ENCODE measurements at regions of chr2 and their contacts with region 1.

Region 1: GRCh38 chr2:166700079-166700478 is 188.2 kb upstream of the XIRP2 start:
- DNase-seq: no peak
- H3K4me3 ChIP-seq: no peak overlapping the region
- H3K27ac ChIP-seq: no peak overlapping the region
- H3K4me1 ChIP-seq: no peaks in the 10 kb centered on the region
- H3K27me3 ChIP-seq: no peaks in the 10 kb centered on the region
- CTCF ChIP-seq: peak in 3 of 11 experiments; percentile 10 to 41 (median 21)
- POLR2A ChIP-seq: no peak

Region 2: GRCh38 chr2:166725927-166726924 is 26.1 kb after region 1 on chr2:
- intact Hi-C with region 1: no loop called
- DNase-seq: no peak
- H3K4me3 ChIP-seq: no peak overlapping the region
- H3K27ac ChIP-seq: no peak overlapping the region
- H3K4me1 ChIP-seq: no peaks in the 10 kb centered on the region
- H3K27me3 ChIP-seq: no peaks in the 10 kb centered on the region
- CTCF ChIP-seq: no peak
- POLR2A ChIP-seq: no peak

Region 3: GRCh38 chr2:166994588-166995336 is 294.7 kb after region 1 on chr2:
- intact Hi-C with region 1: no loop called
- DNase-seq: no peak
- H3K4me3 ChIP-seq: no peak overlapping the region
- H3K27ac ChIP-seq: no peak overlapping the region
- H3K4me1 ChIP-seq: no peaks in the 10 kb centered on the region
- H3K27me3 ChIP-seq: no peaks in the 10 kb centered on the region
- CTCF ChIP-seq: no peak
- POLR2A ChIP-seq: no peak

Region 4: DNA sequence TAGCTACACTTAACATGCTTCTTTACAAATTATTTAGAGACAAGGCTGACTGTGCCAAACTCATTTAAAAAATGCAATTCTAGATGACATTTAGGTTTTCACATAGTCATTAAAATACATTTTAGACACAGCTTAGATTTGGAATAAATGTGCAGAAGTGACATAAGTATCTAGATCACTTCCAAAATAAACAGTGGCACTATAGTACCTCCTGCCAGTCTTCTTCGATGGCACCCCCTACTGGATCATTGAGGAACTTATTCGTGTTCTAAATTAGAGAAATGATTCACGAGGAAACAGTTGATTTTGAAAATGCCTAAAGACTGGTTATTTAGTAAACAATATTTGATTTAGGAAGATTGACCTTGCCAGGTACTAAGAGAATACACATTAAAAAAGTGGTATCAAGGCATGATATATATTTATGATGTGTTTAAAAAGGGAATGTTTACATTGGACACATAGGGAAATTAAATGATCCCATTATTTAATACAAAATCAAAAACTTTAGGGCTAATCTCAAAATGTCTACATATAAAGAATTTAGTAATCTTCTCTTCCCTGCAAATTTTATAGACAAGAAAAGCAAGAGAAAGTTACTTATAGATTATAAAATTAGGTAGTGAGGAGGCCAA is 512.1 kb after region 1 on chr2:
- intact Hi-C with region 1: loop called (anchors 10 kb)
- DNase-seq: no peak
- H3K4me3 ChIP-seq: no peak overlapping the region
- H3K27ac ChIP-seq: no peak overlapping the region
- H3K4me1 ChIP-seq: no peaks in the 10 kb centered on the region
- H3K27me3 ChIP-seq: no peaks in the 10 kb centered on the region
- CTCF ChIP-seq: peak; percentile 3 to 68 (median 52)
- POLR2A ChIP-seq: no peak